AG04450 (cell line): ENCODE measurements at regions of chr12 and their contacts with region 1.

Region 1: GRCh38 chr12:94101738-94102660 is 46.4 kb upstream of the PLXNC1 start:
- DNase-seq: peak; percentile 73
- H3K4me3 ChIP-seq: peak overlapping the region; percentile 66
- H3K27ac ChIP-seq: peak overlapping the region; percentile 39
- H3K27me3 ChIP-seq: peaks cover 3% of the 10 kb centered on the region
- CTCF ChIP-seq: peak; percentile 80

Region 2: GRCh38 chr12:92987362-92987761 is 1114.6 kb before region 1 on chr12:
- CTCF ChIA-PET with region 1: interaction called, 11 read pairs
- POLR2A ChIA-PET with region 1: no interaction called
- DNase-seq: peak; percentile 55
- H3K4me3 ChIP-seq: no peak overlapping the region
- H3K27ac ChIP-seq: no peak overlapping the region
- H3K27me3 ChIP-seq: no peaks in the 10 kb centered on the region
- CTCF ChIP-seq: peak; percentile 58

Region 3: DNA sequence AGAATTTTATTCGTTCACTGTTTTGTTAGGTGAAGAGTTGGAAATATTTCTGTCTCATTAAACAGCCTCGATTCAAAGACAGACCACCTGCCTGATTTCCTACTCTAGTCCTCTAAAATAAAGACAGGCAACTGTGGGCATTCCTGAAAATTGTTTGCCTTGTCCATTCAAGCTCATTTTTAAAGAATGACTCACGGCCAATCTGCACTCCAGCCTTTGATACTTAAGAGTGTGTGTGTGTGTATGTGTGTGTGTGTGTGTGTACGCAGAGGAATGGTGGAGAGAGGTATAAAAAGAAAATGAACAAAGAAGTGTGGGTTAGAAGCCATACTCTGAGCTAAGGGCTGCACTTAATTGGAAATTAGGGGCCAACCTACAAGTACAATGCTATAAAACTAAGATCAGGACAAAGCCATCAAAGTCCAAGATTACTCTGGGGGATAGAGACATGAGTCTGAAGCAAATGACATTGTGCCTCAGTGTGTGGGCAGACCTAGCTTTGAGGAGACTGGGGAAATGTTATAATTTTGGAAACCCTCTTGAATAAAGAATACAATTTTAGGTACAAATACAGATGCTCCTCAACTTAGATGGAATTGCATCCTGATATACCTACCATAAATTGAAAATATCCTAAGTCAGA is 575.1 kb before region 1 on chr12:
- CTCF ChIA-PET with region 1: interaction called, 25 read pairs
- POLR2A ChIA-PET with region 1: no interaction called
- DNase-seq: peak; percentile 85
- H3K4me3 ChIP-seq: no peak overlapping the region
- H3K27ac ChIP-seq: no peak overlapping the region
- H3K27me3 ChIP-seq: no peaks in the 10 kb centered on the region
- CTCF ChIP-seq: no peak

Region 4: GRCh38 chr12:93742110-93742934 is 359.7 kb before region 1 on chr12:
- CTCF ChIA-PET with region 1: interaction called, 21 read pairs
- POLR2A ChIA-PET with region 1: interaction called, 3 read pairs
- DNase-seq: peak; percentile 10
- H3K4me3 ChIP-seq: peak overlapping the region; percentile 69
- H3K27ac ChIP-seq: peak overlapping the region; percentile 70
- H3K27me3 ChIP-seq: no peaks in the 10 kb centered on the region
- CTCF ChIP-seq: peak; percentile 51

Region 5: GRCh38 chr12:93785262-93786010 is 316.6 kb before region 1 on chr12:
- CTCF ChIA-PET with region 1: interaction called, 16 read pairs
- POLR2A ChIA-PET with region 1: no interaction called
- DNase-seq: no peak
- H3K4me3 ChIP-seq: no peak overlapping the region
- H3K27ac ChIP-seq: peak overlapping the region; percentile 81
- H3K27me3 ChIP-seq: no peaks in the 10 kb centered on the region
- CTCF ChIP-seq: no peak

Region 6: GRCh38 chr12:93894391-93895088 is 207.5 kb before region 1 on chr12:
- CTCF ChIA-PET with region 1: interaction called, 11 read pairs
- POLR2A ChIA-PET with region 1: no interaction called
- DNase-seq: no peak
- H3K4me3 ChIP-seq: no peak overlapping the region
- H3K27ac ChIP-seq: peak overlapping the region; percentile 21
- H3K27me3 ChIP-seq: no peaks in the 10 kb centered on the region
- CTCF ChIP-seq: no peak

Region 7: GRCh38 chr12:94126067-94126466 is 24.1 kb after region 1 on chr12:
- CTCF ChIA-PET with region 1: no interaction called
- POLR2A ChIA-PET with region 1: no interaction called
- DNase-seq: no peak
- H3K4me3 ChIP-seq: no peak overlapping the region
- H3K27ac ChIP-seq: no peak overlapping the region
- H3K27me3 ChIP-seq: peaks cover 22% of the 10 kb centered on the region
- CTCF ChIP-seq: no peak

Region 8: DNA sequence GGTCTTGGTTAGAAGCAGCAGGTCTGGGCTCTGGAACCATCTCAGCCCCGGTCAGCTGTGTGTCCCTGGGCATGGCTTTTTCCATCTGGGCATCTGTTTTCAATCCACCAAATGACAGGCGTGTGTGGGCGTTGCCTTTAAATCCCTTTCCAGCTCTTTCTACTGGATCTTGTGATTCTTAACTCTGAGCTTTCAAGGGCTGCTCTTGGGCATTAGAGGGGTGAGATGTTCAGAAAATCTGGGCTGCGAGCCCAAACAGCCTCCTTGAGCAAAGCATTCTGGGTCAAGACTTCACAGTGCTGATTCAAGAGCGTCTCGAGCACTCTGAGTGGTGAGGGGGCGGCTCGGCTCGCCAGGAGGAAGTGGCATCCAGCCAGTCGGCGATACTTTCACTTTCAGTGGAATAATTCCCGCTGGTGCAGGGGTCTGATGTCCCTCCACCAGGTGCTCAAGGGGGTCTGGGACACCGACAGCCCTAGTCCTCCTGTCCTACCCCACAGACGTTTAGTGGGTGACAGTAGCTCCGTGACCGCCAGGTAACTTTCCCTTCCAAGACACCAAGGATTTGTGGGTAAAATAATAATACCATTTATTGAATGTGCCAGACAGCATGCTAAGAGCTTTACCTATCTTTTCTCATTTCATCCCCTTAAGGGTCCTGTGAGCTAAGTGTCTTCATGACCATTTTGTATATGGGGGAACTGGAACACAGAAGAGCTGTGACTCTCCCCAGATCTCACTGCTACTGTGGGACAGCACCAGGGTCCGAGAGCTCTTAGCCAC is 160.4 kb after region 1 on chr12:
- CTCF ChIA-PET with region 1: no interaction called
- POLR2A ChIA-PET with region 1: no interaction called
- DNase-seq: peak; percentile 92
- H3K4me3 ChIP-seq: peak overlapping the region; percentile 66
- H3K27ac ChIP-seq: peak overlapping the region; percentile 89
- H3K27me3 ChIP-seq: no peaks in the 10 kb centered on the region
- CTCF ChIP-seq: no peak

Region 9: DNA sequence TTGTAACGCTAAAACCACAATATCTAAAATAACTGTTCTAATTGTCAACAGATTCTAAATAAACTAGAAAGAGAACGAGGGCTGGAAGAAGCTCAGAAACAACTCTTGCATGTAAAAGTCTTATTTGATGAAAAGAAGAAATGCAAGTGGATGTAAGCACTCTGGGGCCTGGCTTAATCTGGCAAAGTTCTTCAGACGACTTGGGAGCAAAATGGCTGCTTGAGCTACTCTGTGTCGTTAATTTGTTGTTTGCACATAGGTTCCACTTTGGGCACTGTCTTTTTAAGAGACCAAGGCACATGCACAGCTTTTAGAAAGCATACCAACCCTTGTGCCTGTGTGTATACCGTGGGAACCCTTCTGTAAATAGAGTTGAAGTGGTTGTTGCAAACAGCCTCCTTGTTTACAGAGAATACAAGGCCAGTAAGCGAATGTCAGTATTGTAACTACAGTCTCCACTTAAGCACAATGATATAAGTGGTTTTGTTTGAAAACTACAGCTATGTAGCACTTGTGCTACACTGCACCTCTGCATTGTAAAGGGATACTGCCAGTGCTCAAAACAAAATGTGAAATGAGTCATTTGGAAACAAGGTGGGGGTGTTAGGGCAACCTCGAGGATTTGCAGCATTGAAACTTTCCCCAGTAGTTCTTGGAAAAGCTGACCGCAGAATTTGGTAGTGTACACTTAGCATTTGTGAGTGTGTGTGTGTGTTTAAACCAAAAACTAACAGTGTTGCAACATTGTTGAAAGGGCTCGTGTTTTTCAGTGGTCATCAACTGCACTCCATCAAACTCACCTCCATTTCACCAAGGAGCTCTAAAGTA is 203.3 kb after region 1 on chr12:
- CTCF ChIA-PET with region 1: no interaction called
- POLR2A ChIA-PET with region 1: no interaction called
- DNase-seq: peak; percentile 62
- H3K4me3 ChIP-seq: no peak overlapping the region
- H3K27ac ChIP-seq: no peak overlapping the region
- H3K27me3 ChIP-seq: no peaks in the 10 kb centered on the region
- CTCF ChIP-seq: no peak